Gastrocnemius medialis (tissue), 4 donors: ENCODE measurements at regions of chr5 and their contacts with region 1.

Region 1: GRCh38 chr5:36264202-36264760 is 22.6 kb upstream of the NADK2 start:
- DNase-seq: no peak
- ATAC-seq: no peak
- H3K4me3 ChIP-seq: no peak overlapping the region
- H3K27ac ChIP-seq: no peak overlapping the region
- H3K4me1 ChIP-seq: no peaks in the 10 kb centered on the region
- H3K27me3 ChIP-seq: no peaks in the 10 kb centered on the region
- CTCF ChIP-seq: no peak
- POLR2A ChIP-seq: no peak

Region 2: GRCh38 chr5:35963381-35963843 is 300.9 kb before region 1 on chr5:
- in situ Hi-C with region 1: no loop called
- intact Hi-C with region 1: no loop called
- DNase-seq: no peak
- ATAC-seq: peak; percentile 50 to 70
- H3K4me3 ChIP-seq: no peak overlapping the region
- H3K27ac ChIP-seq: no peak overlapping the region
- H3K4me1 ChIP-seq: peaks cover 0 to 6% of the 10 kb centered on the region in 2 donors
- H3K27me3 ChIP-seq: no peaks in the 10 kb centered on the region
- CTCF ChIP-seq: peak; percentile 40 to 66 (median 60)
- POLR2A ChIP-seq: no peak

Region 3: GRCh38 chr5:36089989-36090564 is 174.2 kb before region 1 on chr5:
- in situ Hi-C with region 1: no loop called
- intact Hi-C with region 1: no loop called
- DNase-seq: no peak
- ATAC-seq: no peak
- H3K4me3 ChIP-seq: no peak overlapping the region
- H3K27ac ChIP-seq: no peak overlapping the region
- H3K4me1 ChIP-seq: no peaks in the 10 kb centered on the region
- H3K27me3 ChIP-seq: no peaks in the 10 kb centered on the region
- CTCF ChIP-seq: no peak
- POLR2A ChIP-seq: no peak

Region 4: DNA sequence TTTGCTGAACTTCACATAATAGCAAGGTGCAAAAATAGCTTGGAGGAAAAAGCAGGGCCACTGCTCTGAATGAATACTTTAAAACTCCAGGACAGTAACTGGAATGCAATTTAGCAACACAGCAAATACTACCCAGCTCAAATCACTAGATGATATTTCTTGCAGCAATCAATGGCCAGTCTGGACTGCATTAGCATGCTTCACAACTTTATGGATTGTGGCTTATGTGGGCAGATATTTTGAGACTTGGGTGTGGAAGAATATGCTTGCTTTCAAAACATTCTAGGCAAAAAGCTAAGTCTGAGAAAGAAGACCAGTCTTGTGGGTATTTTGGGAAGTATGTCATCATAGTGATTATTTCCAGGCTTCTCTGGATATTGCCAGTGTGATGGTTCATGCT is 34.2 kb after region 1 on chr5:
- in situ Hi-C with region 1: no loop called
- intact Hi-C with region 1: no loop called
- DNase-seq: no peak
- ATAC-seq: no peak
- H3K4me3 ChIP-seq: no peak overlapping the region
- H3K27ac ChIP-seq: no peak overlapping the region
- H3K4me1 ChIP-seq: peaks cover 22% of the 10 kb centered on the region in 2 donors
- H3K27me3 ChIP-seq: no peaks in the 10 kb centered on the region
- CTCF ChIP-seq: no peak
- POLR2A ChIP-seq: no peak

Region 5: DNA sequence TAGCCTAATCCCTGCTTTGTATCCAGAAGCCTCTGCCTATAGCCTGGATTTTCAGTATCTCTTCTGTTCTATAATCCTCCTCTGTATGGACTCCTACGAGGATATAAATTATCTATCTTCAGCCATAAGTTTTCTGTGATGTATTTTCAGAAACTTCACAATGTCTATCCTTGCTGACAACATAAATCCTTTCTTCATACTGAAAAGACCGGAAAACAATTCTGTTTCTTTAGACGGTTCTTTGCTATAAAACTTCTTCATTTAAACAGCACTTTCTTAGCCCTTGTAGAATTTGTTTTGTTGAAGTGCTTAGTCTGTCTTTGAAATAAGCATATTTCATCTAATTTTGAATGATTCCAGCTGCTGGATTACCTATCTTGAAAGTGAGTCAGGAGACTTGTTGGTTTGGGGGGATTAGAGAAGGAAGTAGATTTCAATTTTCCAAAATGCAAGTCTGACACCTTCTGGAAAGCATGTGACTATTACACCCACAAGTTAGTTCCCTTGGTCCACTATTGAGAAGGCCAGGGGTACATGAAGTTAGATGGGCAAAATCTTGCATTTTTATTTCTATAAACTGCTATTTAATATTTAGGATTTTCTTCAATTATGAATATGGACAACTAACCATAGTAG is 133.7 kb after region 1 on chr5:
- in situ Hi-C with region 1: loop called in 2 of 4 experiments (anchors 10 kb)
- intact Hi-C with region 1: no loop called
- DNase-seq: no peak
- ATAC-seq: no peak
- H3K4me3 ChIP-seq: no peak overlapping the region
- H3K27ac ChIP-seq: no peak overlapping the region
- H3K4me1 ChIP-seq: no peaks in the 10 kb centered on the region
- H3K27me3 ChIP-seq: no peaks in the 10 kb centered on the region
- CTCF ChIP-seq: no peak
- POLR2A ChIP-seq: no peak

Region 6: DNA sequence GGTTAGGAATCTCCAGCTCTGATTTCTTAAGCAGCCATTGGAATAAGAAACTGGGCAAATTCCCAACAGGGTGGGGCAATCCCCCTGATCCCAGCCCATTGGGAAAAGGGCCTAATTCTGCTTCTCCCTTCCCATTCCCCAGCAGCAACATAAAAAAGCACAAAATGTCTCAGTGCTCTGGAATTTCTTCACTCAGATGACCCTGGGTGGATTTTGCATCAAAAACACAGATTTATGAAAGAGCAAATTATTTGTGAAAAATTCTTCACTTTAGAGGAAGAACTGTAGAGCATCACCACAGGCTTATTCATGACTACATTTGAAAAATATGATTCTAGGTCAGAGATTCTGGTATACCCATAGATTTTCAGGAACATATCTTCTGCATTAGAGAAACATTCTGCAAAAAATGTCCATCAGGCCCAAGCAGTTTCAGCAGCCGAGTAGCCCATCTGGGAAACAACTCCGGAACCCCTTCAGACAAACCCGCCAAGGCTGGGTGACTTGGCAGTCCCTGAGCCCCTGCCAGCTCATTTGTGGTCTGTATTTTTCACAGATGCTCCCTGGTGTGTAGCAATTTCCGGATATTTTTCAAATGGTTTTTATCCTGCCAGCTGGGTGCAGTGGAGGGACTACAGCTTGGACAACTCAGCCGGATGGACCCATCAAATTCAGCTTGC is 139.5 kb after region 1 on chr5:
- in situ Hi-C with region 1: loop called in 2 of 4 experiments (anchors 10 kb)
- intact Hi-C with region 1: no loop called
- DNase-seq: peak; percentile 24 to 53
- ATAC-seq: peak; percentile 70 to 81
- H3K4me3 ChIP-seq: no peak overlapping the region
- H3K27ac ChIP-seq: peak overlapping the region; percentile 21 to 63 (median 54)
- H3K4me1 ChIP-seq: no peaks in the 10 kb centered on the region
- H3K27me3 ChIP-seq: no peaks in the 10 kb centered on the region
- CTCF ChIP-seq: no peak
- POLR2A ChIP-seq: no peak